PC-3 (cell line): ENCODE measurements at regions of chr14 and their contacts with region 1.

Region 1: GRCh38 chr14:97106207-97107008 is 309.2 kb downstream of the VRK1 start:
- DNase-seq: peak; percentile 91
- ATAC-seq: peak; percentile 69
- H3K4me3 ChIP-seq: no peak overlapping the region
- H3K27ac ChIP-seq: peak overlapping the region; percentile 100
- H3K4me1 ChIP-seq: peaks cover 35% of the 10 kb centered on the region
- H3K27me3 ChIP-seq: no peaks in the 10 kb centered on the region
- CTCF ChIP-seq: no peak

Region 2: DNA sequence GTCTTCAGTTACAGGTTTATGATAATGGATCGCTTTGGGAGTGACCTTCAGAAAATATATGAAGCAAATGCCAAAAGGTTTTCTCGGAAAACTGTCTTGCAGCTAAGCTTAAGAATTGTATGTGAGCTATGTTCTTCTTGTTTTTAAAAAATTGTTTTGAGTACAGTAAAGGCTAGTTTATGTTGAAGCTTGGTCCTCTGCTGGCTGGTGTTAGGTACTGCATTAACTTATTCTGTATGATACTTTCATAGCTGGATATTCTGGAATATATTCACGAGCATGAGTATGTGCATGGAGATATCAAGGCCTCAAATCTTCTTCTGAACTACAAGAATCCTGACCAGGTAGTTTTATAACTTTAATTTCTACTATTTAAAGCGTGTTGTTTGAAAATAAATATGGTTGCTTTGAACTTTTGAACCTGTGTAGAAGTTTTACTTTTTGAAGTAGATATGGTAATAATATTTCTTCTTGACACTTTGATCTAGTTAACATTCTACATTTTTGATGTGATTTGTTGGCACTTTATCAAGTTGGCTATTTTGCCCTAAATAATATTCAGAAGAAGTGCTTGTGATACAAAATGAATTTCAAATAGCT is 253.5 kb before region 1 on chr14:
- CTCF ChIA-PET with region 1: no interaction called
- POLR2A ChIA-PET with region 1: no interaction called
- intact Hi-C with region 1: loop called (anchors 10 kb)
- DNase-seq: peak; percentile 52
- ATAC-seq: peak; percentile 70
- H3K4me3 ChIP-seq: no peak overlapping the region
- H3K27ac ChIP-seq: no peak overlapping the region
- H3K4me1 ChIP-seq: peaks cover 13% of the 10 kb centered on the region
- H3K27me3 ChIP-seq: no peaks in the 10 kb centered on the region
- CTCF ChIP-seq: peak; percentile 80

Region 3: DNA sequence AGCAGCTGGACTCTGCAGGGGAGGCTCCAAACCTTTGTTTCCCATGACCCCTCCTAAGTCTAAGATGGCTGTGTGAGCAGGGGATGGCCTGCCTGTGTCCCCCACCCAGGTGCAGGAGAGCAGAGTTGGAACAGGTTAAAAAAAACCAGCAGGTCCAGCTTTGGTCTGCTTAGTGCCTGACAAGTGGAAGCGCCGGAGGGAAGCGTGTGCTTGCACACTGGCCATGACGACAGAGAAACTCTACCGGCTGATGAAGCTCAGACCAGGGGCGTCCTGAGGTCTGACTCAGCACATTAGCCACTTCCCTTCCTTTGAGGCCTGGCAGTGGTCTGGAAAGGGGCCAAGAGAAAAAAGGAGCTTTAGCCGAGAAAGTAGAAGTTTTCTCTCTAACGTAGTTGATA is 29.2 kb before region 1 on chr14:
- CTCF ChIA-PET with region 1: interaction called, 3 read pairs
- POLR2A ChIA-PET with region 1: interaction called, 3 read pairs
- intact Hi-C with region 1: loop called (anchors 1 kb)
- DNase-seq: peak; percentile 97
- ATAC-seq: peak; percentile 90
- H3K4me3 ChIP-seq: peak overlapping the region; percentile 8; the same call in 1 of the 2 replicates
- H3K27ac ChIP-seq: peak overlapping the region; percentile 95
- H3K4me1 ChIP-seq: peaks cover 22% of the 10 kb centered on the region
- H3K27me3 ChIP-seq: no peaks in the 10 kb centered on the region
- CTCF ChIP-seq: no peak

Region 4: DNA sequence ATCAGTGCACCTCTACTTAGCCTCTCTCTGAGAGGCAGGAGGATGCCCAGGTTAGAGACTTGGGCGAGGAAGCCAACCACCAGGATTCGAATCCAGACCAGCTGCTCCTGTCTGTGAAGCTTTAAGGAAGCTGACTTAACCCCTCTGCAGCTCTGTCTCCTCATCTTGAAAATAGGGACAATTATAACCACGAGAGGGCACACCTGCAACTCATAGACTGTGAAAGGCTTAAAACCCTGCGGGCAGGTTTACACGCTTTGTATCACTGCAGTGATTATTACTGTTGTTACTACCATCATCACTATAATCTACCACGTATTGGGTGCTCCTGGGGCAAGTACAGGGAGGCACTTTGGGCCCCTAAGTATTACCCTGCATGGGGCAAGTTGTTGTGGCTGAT is 70.6 kb after region 1 on chr14:
- CTCF ChIA-PET with region 1: interaction called, 3 read pairs
- POLR2A ChIA-PET with region 1: no interaction called
- intact Hi-C with region 1: loop called (anchors 1 kb)
- DNase-seq: peak; percentile 81
- ATAC-seq: peak; percentile 49
- H3K4me3 ChIP-seq: no peak overlapping the region
- H3K27ac ChIP-seq: 0 out of 2 replicates have a peak overlapping the region, but pooled peaks have one; percentile 77
- H3K4me1 ChIP-seq: peaks cover 40% of the 10 kb centered on the region
- H3K27me3 ChIP-seq: no peaks in the 10 kb centered on the region
- CTCF ChIP-seq: peak; percentile 68

Region 5: GRCh38 chr14:97198813-97199212 is 92.4 kb after region 1 on chr14:
- CTCF ChIA-PET with region 1: no interaction called
- POLR2A ChIA-PET with region 1: no interaction called
- intact Hi-C with region 1: no loop called
- DNase-seq: no peak
- ATAC-seq: no peak
- H3K4me3 ChIP-seq: no peak overlapping the region
- H3K27ac ChIP-seq: no peak overlapping the region
- H3K4me1 ChIP-seq: no peaks in the 10 kb centered on the region
- H3K27me3 ChIP-seq: peaks cover 37% of the 10 kb centered on the region
- CTCF ChIP-seq: no peak